Body of pancreas (tissue), 4 donors: ENCODE measurements at regions of chr9 and their contacts with region 1.

Region 1: DNA sequence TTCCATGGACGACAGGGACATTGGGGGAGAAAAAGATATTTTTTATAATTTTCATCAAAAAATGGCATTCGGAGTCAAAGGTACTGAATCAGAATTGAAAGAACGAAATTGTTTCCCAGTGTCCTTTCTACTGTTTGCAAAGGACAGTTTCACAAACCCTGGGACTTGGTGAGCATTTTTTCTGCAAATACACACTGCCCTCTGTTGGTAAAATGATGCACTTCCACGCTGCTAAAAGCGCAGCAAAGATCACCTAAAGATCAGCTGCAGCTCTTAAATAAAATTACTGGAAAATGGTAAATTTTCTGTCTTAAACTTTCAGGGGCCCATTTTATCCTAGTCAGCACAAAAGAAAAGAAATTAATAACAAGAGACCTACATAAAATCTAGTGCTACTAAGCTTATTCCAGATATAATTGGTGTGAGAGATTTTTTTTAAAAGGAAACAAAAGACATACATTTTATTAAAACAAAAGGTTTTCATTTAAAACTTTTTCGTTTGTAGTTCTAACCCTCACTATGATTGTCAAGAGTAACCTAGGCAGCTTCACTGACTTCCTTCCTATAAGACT is 566.0 kb downstream of the CAAP1 start:
- DNase-seq: peak; percentile 31 to 38 (median 35)
- ATAC-seq: peak; percentile 77
- H3K4me3 ChIP-seq: no peak overlapping the region
- H3K27ac ChIP-seq: no peak overlapping the region
- H3K4me1 ChIP-seq: peaks cover 8% of the 10 kb centered on the region
- H3K27me3 ChIP-seq: no peaks in the 10 kb centered on the region
- CTCF ChIP-seq: peak; percentile 57 to 87 (median 77)
- POLR2A ChIP-seq: no peak

Region 2: GRCh38 chr9:25964239-25964638 is 362.3 kb before region 1 on chr9:
- intact Hi-C with region 1: loop called (anchors 10 kb)
- DNase-seq: peak in 3 of 4 donors; percentile 19 to 39 (median 35)
- ATAC-seq: peak; percentile 42
- H3K4me3 ChIP-seq: no peak overlapping the region
- H3K27ac ChIP-seq: no peak overlapping the region
- H3K4me1 ChIP-seq: no peaks in the 10 kb centered on the region
- H3K27me3 ChIP-seq: no peaks in the 10 kb centered on the region
- CTCF ChIP-seq: peak in 4 of 7 experiments; percentile 34 to 65 (median 46)
- POLR2A ChIP-seq: no peak